Activated CD4-positive, alpha-beta T cell treated with anti-CD3 and anti-CD28 coated beads for 36 hours (primary cell): ENCODE measurements at regions of chr7 and their contacts with region 1.

Region 1: DNA sequence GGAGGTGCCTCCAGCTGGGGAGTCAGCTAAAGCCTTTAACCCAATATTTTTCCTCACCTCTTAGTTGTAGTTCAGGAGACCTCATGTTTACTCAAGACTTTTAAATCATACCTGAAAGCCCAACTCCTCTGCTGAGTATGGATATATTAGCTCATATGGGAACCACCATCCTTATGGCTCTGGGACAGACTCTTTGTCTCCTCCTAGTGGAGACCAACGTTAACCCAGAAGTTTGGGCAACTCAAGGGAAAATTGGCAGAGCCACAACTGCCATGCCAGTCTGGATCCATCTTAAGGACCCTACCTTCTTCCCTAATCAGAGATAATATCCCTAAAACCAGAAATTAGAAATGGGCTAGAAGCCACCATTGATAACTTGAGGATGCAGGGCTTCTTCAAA is 80.8 kb downstream of the TMEM106B start:
- DNase-seq: peak; percentile 21
- ATAC-seq: peak; percentile 58
- H3K4me3 Mint-ChIP-seq: no peak overlapping the region
- H3K27ac Mint-ChIP-seq: no peak overlapping the region
- H3K4me1 Mint-ChIP-seq: no peaks in the 10 kb centered on the region
- H3K27me3 Mint-ChIP-seq: no peaks in the 10 kb centered on the region

Region 2: DNA sequence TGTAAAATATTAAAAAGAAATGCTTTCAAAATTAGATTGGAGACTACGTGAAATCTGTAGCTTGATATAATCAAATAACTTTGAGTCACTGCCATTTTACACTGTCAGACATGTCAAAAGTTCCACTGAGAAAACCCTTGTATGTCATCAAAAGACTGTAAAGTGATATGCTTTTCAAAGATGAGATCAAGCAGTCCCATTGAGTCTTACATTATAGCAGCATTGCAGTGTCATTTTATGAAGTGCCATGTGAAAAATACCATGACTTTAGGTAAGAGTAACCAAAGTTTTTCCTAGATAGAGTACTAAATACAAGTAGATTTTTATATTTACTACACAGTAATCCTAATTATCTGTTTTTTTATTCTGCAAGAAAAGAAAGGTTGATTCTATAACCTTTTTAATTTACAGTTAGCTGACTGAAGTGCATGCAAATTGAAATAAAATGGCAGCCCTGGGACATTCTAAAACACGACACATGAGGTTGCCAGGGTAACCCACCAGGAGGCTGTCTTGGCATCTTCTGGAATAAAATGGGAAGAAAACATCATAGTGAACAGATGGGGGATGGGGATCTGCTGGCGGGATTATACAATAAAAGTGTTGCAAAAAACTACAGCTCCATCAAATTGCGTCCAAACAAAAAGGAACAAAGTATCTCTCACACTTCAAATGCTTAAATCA is 172.1 kb before region 1 on chr7:
- CTCF ChIA-PET with region 1: no interaction called
- POLR2A ChIA-PET with region 1: no interaction called
- intact Hi-C with region 1: loop called in 1 of 2 experiments (anchors 5 kb)
- DNase-seq: no peak
- ATAC-seq: no peak
- H3K4me3 Mint-ChIP-seq: no peak overlapping the region
- H3K27ac Mint-ChIP-seq: no peak overlapping the region
- H3K4me1 Mint-ChIP-seq: no peaks in the 10 kb centered on the region
- H3K27me3 Mint-ChIP-seq: peaks cover 8% of the 10 kb centered on the region